Testis (tissue), 5 donors: ENCODE measurements at regions of chr2 and their contacts with region 1.

Region 1: DNA sequence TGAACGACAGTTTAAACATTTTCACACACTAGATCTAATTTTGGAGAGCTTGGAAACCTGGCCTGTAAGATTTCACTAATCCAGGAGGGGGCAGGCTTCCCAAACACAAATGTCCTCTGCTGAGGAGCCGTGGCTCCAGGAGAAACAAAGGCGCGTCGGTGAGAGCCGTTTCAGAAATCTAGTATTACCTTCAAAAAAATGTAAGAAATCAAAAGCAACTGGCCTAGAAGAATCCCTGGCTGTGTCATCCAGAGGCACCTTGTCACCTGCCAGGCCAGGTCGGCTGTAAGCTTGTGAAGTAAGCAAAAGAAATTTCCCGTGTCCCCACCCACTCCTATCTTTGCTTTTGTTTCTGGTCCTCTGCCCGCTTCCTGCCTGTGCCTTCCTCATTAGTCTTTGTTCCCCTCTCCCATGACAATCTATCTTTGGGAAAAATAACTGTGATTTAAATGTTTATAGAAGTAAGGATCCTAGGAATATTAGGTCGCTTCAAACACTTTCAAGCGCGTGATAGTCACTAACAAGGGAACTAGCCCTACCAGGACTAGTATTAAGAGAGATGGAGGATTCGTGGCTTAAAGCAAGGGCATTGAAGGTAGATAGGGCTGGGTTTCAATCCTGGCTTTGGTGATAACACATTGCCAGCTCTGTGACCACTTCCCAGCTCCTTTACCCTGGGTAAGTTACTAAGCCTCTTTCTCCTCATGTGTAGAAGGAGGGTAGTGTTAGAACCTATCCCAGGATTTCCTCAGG is 99.5 kb upstream of the STK39 start:
- DNase-seq: peak; percentile 86
- H3K4me3 ChIP-seq: peak overlapping the region; percentile 43 to 57
- H3K27ac ChIP-seq: no peak overlapping the region
- H3K4me1 ChIP-seq: no peaks in the 10 kb centered on the region
- H3K27me3 ChIP-seq: no peaks in the 10 kb centered on the region
- CTCF ChIP-seq: peak; percentile 84 to 95 (median 88)
- POLR2A ChIP-seq: no peak

Region 2: DNA sequence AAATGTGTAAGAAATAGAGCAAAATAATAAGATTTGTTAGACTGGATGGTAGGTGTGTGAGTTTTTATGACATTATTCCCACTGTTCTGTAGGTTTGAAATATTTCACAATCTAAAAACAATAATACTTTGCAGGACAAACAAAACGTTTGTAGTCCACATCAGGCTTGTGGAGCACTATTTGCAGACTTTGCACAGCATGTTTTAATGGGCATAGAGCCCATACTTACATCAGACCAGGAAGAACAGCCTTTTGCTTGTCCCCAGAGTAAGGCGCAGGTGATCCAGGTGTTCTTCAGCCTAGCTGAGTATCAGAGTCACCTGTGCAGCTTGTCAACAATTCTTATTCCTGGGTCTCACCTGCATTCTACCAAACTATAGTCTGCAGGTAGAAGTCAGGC is 90.5 kb before region 1 on chr2:
- intact Hi-C with region 1: no loop called
- DNase-seq: no peak
- H3K4me3 ChIP-seq: no peak overlapping the region
- H3K27ac ChIP-seq: no peak overlapping the region
- H3K4me1 ChIP-seq: no peaks in the 10 kb centered on the region
- H3K27me3 ChIP-seq: no peaks in the 10 kb centered on the region
- CTCF ChIP-seq: no peak
- POLR2A ChIP-seq: no peak

Region 3: GRCh38 chr2:168758970-168759820 is 412.3 kb after region 1 on chr2:
- intact Hi-C with region 1: loop called (anchors 5 kb)
- DNase-seq: peak; percentile 38
- H3K4me3 ChIP-seq: no peak overlapping the region
- H3K27ac ChIP-seq: no peak overlapping the region
- H3K4me1 ChIP-seq: no peaks in the 10 kb centered on the region
- H3K27me3 ChIP-seq: no peaks in the 10 kb centered on the region
- CTCF ChIP-seq: peak; percentile 43 to 70 (median 62)
- POLR2A ChIP-seq: no peak

Region 4: DNA sequence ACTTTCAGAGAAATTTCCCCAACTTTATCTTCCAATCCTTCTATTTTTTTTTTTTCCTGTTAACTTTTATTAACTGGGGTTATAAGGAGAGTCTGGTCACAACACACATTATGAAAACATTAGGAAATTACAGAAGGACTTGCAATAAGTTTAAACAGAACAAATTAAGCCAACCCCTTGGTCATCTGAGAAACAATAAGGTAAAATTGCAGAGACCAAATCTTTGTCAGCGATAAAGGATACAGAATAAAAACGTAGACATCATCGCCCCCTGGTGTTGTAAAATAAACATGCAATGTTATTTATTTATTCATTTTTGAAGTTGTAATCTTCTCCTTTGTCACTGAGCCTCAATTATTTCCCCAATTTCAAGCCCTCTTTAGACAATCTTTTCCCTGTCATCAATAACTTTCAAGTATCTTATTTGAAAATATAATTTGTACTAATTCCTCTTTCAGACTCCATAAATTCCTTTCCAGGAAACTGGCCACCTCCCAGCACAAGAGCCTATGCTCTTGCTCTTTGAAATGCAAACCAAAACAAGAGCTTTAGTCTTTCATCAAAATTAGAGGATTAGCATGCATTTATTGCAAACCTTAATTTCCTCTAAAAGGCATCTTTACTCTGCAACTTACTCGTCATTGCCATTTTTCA is 573.7 kb after region 1 on chr2:
- intact Hi-C with region 1: loop called (anchors 10 kb)
- DNase-seq: no peak
- H3K4me3 ChIP-seq: no peak overlapping the region
- H3K27ac ChIP-seq: no peak overlapping the region
- H3K4me1 ChIP-seq: no peaks in the 10 kb centered on the region
- H3K27me3 ChIP-seq: no peaks in the 10 kb centered on the region
- CTCF ChIP-seq: peak; percentile 46 to 86 (median 74)
- POLR2A ChIP-seq: no peak